SK-N-SH (cell line): ENCODE measurements at regions of chr7 and their contacts with region 1.

Region 1: DNA sequence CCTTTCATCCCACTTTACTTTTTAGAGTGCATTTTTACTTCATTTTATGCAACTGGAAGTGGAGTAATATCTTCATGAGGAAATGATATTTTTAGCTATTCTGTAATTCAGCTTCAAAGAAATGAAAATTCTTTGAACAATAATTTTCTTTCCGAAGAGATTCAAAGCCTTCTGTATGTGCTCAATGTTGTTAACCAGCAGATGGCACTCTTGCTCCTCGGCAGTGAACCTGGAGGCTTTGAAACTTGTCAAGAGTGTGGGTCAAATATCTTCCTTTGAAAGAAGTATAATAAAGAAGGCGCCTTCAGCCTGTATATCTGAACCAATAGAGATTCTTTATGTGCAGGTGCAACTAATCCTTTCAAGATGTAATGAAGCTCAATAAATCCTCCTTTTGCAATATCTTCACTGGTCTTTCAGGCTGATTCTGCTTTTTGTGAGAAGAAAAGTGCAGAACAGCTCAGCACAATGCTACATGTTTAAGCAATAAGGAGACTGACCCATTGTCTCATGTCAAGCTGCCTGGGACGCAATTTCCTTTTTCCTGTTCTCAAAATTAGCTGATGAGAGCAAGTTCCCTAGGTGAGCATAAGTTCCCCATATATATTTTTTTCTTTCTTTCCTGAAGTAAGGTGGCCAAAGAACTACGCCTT is 258.4 kb downstream of the SEMA3A start:
- DNase-seq: peak; percentile 57
- H3K4me3 ChIP-seq: no peak overlapping the region
- H3K27ac ChIP-seq: no peak overlapping the region
- H3K4me1 ChIP-seq: no peaks in the 10 kb centered on the region
- H3K27me3 ChIP-seq: no peaks in the 10 kb centered on the region
- CTCF ChIP-seq: peak; percentile 100
- EP300 ChIP-seq: no peak
- RAD21 ChIP-seq: peak; percentile 99

Region 2: GRCh38 chr7:83857691-83858090 is 78.5 kb before region 1 on chr7:
- CTCF ChIA-PET with region 1: no interaction called
- POLR2A ChIA-PET with region 1: no interaction called
- DNase-seq: no peak
- H3K4me3 ChIP-seq: no peak overlapping the region
- H3K27ac ChIP-seq: no peak overlapping the region
- H3K4me1 ChIP-seq: no peaks in the 10 kb centered on the region; a peak in 1 of 4 replicates
- H3K27me3 ChIP-seq: no peaks in the 10 kb centered on the region
- CTCF ChIP-seq: no peak
- EP300 ChIP-seq: no peak
- RAD21 ChIP-seq: no peak

Region 3: GRCh38 chr7:83921941-83922607 is 14.1 kb before region 1 on chr7:
- CTCF ChIA-PET with region 1: interaction called, 25 read pairs
- POLR2A ChIA-PET with region 1: no interaction called
- DNase-seq: peak; percentile 53
- H3K4me3 ChIP-seq: no peak overlapping the region
- H3K27ac ChIP-seq: peak overlapping the region; percentile 54 to 79
- H3K4me1 ChIP-seq: peaks cover 0 to 16% of the 10 kb centered on the region in 2 experiments; a peak in 2 of 4 replicates
- H3K27me3 ChIP-seq: no peaks in the 10 kb centered on the region
- CTCF ChIP-seq: no peak
- EP300 ChIP-seq: peak; percentile 7 to 17; a peak in 2 of 4 replicates
- RAD21 ChIP-seq: 0 out of 2 replicates have a peak, but pooled peaks have one; percentile 7

Region 4: DNA sequence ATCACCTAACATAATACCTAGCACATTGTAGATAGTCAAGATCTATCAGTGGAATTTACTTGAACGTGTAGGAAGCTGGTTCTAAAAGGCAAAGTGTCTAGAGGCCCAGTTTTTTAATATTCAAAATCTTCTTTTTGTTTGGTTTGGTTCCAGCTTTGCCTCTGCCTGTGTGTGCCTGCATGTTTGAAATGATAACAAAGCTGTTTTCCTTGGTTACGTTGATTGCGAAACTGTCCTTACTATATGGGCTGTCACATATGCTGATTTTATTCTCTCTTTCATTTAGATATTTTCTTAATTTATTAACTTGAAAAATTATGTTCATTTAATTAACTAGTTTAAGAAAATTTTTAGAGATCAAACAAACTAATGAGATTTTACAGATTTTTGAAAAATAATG is 21.2 kb after region 1 on chr7:
- CTCF ChIA-PET with region 1: interaction called, 63 read pairs
- POLR2A ChIA-PET with region 1: no interaction called
- DNase-seq: no peak
- H3K4me3 ChIP-seq: no peak overlapping the region
- H3K27ac ChIP-seq: no peak overlapping the region
- H3K4me1 ChIP-seq: no peaks in the 10 kb centered on the region
- H3K27me3 ChIP-seq: no peaks in the 10 kb centered on the region
- CTCF ChIP-seq: no peak
- EP300 ChIP-seq: no peak
- RAD21 ChIP-seq: no peak

Region 5: DNA sequence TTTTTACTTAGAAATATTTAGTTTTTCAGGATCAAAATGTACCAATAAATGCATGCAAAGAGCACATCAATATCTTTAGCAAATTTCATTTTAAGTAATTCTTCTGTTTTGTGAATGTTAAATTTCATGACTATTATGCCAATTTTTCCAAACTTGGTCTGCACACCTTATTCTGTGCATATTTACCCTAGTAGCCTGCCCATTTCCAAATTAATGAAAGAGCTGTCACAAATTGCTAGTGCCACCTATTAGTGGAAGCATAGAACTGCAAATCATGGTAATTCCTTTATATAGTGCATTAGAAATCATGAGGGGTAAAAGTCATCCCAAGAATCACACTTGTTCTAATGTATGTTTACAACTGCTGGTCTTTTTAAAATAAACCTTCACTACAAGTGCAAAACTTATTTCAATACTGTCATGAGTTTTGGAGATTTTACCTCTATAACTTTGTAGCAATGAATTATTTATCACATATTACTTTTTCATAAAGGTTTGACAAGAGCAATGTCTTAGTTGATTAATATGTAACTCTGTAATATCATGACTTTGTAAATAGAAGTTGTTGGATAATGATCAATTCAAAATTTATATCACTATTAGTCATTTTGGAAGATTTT is 252.7 kb after region 1 on chr7:
- CTCF ChIA-PET with region 1: interaction called, 14 read pairs
- POLR2A ChIA-PET with region 1: no interaction called
- DNase-seq: peak; percentile 21
- H3K4me3 ChIP-seq: no peak overlapping the region; a peak in 1 of 4 replicates
- H3K27ac ChIP-seq: peak overlapping the region in 1 of 2 experiments; percentile 65; a peak in 2 of 4 replicates
- H3K4me1 ChIP-seq: peaks cover 2 to 31% of the 10 kb centered on the region in 2 experiments; a peak in 2 of 4 replicates
- H3K27me3 ChIP-seq: no peaks in the 10 kb centered on the region
- CTCF ChIP-seq: peak; percentile 70
- EP300 ChIP-seq: no peak
- RAD21 ChIP-seq: peak; percentile 81

Region 6: GRCh38 chr7:85030893-85031292 is 1094.7 kb after region 1 on chr7:
- CTCF ChIA-PET with region 1: interaction called, 268 read pairs
- POLR2A ChIA-PET with region 1: no interaction called
- DNase-seq: peak; percentile 1
- H3K4me3 ChIP-seq: no peak overlapping the region
- H3K27ac ChIP-seq: no peak overlapping the region
- H3K4me1 ChIP-seq: peaks cover 0 to 5% of the 10 kb centered on the region in 2 experiments; a peak in 2 of 4 replicates
- H3K27me3 ChIP-seq: no peaks in the 10 kb centered on the region
- CTCF ChIP-seq: peak; percentile 95
- EP300 ChIP-seq: no peak
- RAD21 ChIP-seq: peak; percentile 78